ENCODE measurements at regions of chr21 and their contacts with region 1.

Region 1: GRCh38 chr21:42593007-42593806 is 60.2 kb upstream of the PDE9A start:
- DNase-seq: peak; percentile 18 to 71 (median 46)
- H3K4me3 ChIP-seq: no peak overlapping the region
- H3K4me3 Mint-ChIP-seq: no peak overlapping the region
- H3K27ac ChIP-seq: no peak overlapping the region
- H3K27ac Mint-ChIP-seq: no peak overlapping the region
- H3K4me1 ChIP-seq: peaks cover 9% of the 10 kb centered on the region
- H3K4me1 Mint-ChIP-seq: peaks cover 0 to 5% (median 5%) of the 10 kb centered on the region in 3 donors
- H3K27me3 ChIP-seq: peaks cover 4% of the 10 kb centered on the region
- H3K27me3 Mint-ChIP-seq: peaks cover 7 to 22% of the 10 kb centered on the region in 2 donors

Region 2: GRCh38 chr21:42554286-42554961 is 38.8 kb before region 1 on chr21:
- CTCF ChIA-PET with region 1: no interaction called
- POLR2A ChIA-PET with region 1: no interaction called
- DNase-seq: no peak
- H3K4me3 ChIP-seq: no peak overlapping the region
- H3K4me3 Mint-ChIP-seq: no peak overlapping the region
- H3K27ac ChIP-seq: no peak overlapping the region
- H3K27ac Mint-ChIP-seq: peak overlapping the region in 1 of 8 donors; percentile 32
- H3K4me1 ChIP-seq: no peaks in the 10 kb centered on the region
- H3K4me1 Mint-ChIP-seq: no peaks in the 10 kb centered on the region
- H3K27me3 ChIP-seq: no peaks in the 10 kb centered on the region
- H3K27me3 Mint-ChIP-seq: no peaks in the 10 kb centered on the region

Region 3: DNA sequence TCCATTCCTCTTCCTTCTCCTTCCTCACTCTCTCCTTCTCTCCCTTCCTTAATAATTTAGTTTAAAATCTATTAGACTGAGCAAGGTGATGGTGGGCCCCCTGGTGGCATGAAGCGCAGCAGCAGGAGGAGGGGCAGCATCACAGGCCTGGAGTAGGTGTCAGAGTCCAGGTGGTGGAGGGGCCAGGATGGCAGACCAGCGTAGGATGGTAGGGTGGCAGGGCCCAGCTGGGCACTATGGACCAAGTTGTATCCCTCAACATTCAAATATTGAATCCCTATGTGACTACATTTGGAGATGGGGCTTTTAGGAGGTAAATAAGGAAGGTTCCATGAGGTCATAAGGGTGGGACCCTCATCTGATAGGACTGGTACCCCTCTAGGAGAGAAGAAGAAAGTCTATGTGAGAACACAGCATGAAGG is 225.1 kb after region 1 on chr21:
- CTCF ChIA-PET with region 1: interaction called, 20 read pairs
- POLR2A ChIA-PET with region 1: interaction called, 6 read pairs
- DNase-seq: peak in 4 of 5 donors; percentile 30 to 76 (median 58)
- H3K4me3 ChIP-seq: no peak overlapping the region
- H3K4me3 Mint-ChIP-seq: no peak overlapping the region
- H3K27ac ChIP-seq: no peak overlapping the region
- H3K27ac Mint-ChIP-seq: peak overlapping the region in 1 of 8 donors; percentile 66
- H3K4me1 ChIP-seq: no peaks in the 10 kb centered on the region
- H3K4me1 Mint-ChIP-seq: no peaks in the 10 kb centered on the region
- H3K27me3 ChIP-seq: peaks cover 10% of the 10 kb centered on the region
- H3K27me3 Mint-ChIP-seq: peaks cover 8 to 19% of the 10 kb centered on the region in 2 donors